ENCODE measurements at regions of chrX and their contacts with region 1.

Region 1: DNA sequence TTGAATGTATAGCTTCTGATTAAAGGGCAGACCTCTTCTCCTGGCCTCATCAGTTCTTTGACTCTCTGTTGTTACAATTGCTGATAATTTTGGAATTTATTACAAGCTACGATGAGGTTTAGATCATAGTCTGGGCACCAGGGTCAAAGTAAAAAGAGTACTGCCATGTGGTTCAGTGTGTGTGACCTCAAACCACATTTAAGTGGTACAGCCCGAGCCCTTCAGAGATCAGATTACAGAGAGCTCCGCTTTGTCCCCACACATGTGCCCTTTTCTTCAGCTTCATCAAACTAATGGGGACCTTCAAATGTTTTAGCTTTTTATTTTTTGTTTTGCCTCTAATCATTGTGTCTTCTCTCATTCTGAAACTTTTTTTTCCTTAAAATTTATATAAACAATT is 37.1 kb downstream of the SPANXN2 start:
- DNase-seq: no peak
- ATAC-seq: no peak
- H3K4me3 ChIP-seq: no peak overlapping the region
- H3K27ac ChIP-seq: no peak overlapping the region
- H3K4me1 ChIP-seq: no peaks in the 10 kb centered on the region
- H3K27me3 ChIP-seq: no peaks in the 10 kb centered on the region
- CTCF ChIP-seq: no peak

Region 2: GRCh38 chrX:143615851-143616250 is 67.6 kb before region 1 on chrX:
- intact Hi-C with region 1: no loop called
- DNase-seq: no peak
- ATAC-seq: no peak
- H3K4me3 ChIP-seq: no peak overlapping the region
- H3K27ac ChIP-seq: no peak overlapping the region
- H3K4me1 ChIP-seq: no peaks in the 10 kb centered on the region
- H3K27me3 ChIP-seq: no peaks in the 10 kb centered on the region
- CTCF ChIP-seq: no peak

Region 3: DNA sequence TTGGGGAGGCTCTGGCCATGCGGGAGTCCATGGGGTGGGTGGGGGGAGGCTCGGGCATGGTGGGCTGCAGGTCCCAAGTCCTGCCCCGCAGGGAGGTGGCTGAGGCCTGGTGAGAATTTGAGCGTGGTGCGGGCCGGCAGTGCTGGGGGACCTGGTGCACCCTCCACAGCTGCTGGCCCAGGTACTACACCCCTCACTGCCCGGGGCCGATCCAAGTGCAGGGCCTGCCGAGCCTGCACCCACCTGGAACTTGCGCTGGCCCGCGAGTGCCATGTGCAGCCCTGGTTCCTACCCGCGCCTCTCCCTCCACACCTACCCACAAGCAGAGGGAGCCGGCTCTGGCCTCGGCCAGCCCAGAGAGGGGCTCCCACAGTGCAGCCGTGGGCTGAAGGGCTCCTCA is 42.8 kb after region 1 on chrX:
- intact Hi-C with region 1: loop called in 1 of 10 experiments (anchors 1 kb)
- DNase-seq: no peak
- ATAC-seq: no peak
- H3K4me3 ChIP-seq: no peak overlapping the region
- H3K27ac ChIP-seq: no peak overlapping the region
- H3K4me1 ChIP-seq: no peaks in the 10 kb centered on the region
- H3K27me3 ChIP-seq: no peaks in the 10 kb centered on the region
- CTCF ChIP-seq: no peak

Measured in heart right ventricle (tissue), 16 donors.